K562 (cell line): ENCODE measurements at regions of chr11 and their contacts with region 1.

Region 1: GRCh38 chr11:114340311-114341131 is 44.3 kb downstream of the NNMT start:
- DNase-seq: peak; percentile 54 to 78 (median 60)
- ATAC-seq: peak; percentile 91
- H3K4me3 ChIP-seq: peak overlapping the region; percentile 27
- H3K27ac ChIP-seq: peak overlapping the region; percentile 40; the same call in 1 of the 3 replicates
- H3K4me1 ChIP-seq: peaks cover 6 to 11% of the 10 kb centered on the region in 2 experiments; a peak in 3 of 5 replicates
- H3K27me3 ChIP-seq: no peaks in the 10 kb centered on the region
- CTCF ChIP-seq: peak; percentile 80 to 90 (median 84)
- EP300 ChIP-seq: peak; percentile 9; the same call in 1 of the 2 replicates
- POLR2A ChIP-seq: no peak
- RAD21 ChIP-seq: peak; percentile 87 to 89

Region 2: DNA sequence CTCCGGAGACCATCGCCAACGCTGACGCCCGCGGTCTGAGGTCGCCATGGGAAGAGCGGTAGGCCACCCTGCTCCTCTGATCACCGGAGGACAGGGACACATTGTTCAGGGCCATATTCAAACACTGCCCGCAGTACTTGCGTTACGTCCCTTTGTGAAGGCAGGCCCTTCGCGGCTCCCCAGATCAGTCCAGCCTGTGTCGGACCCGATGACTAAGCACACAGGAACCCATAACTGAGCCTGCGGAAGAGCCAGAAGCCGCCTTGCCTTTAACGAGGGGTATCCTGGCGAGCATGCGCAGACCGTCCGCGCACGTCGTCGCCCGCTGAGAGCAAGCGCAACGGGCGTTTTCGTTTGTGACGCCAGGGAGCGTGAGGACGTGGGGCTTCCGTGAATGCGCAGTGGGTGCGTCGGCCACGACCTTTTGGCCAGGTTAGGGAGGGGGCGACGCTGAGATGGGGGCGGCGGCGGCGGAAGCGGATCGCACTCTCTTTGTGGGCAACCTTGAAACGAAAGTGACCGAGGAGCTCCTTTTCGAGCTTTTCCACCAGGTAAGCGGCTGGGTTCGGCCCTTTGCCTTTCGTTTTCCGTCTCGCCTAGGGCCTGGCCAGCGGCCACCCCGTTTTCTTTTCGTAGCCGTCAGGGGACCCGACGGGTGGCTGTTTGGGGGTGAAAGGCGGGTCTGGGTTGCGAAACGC is 59.8 kb after region 1 on chr11 and contains the starts of genes C11orf71 and RBM7:
- CTCF ChIA-PET with region 1: no interaction called
- POLR2A ChIA-PET with region 1: no interaction called
- in situ Hi-C with region 1: no loop called
- intact Hi-C with region 1: loop called (anchors 2 kb)
- DNase-seq: peak; percentile 90 to 99 (median 92)
- ATAC-seq: peak; percentile 90
- H3K4me3 ChIP-seq: peak within 1 kb of the TSS; percentile 54
- H3K27ac ChIP-seq: peak within 1 kb of the TSS; percentile 99
- H3K4me1 ChIP-seq: peaks cover 3 to 25% of the 10 kb centered on the region in 2 experiments
- H3K27me3 ChIP-seq: no peaks in the 10 kb centered on the region
- CTCF ChIP-seq: peak in 1 of 3 experiments; percentile 18; a peak in 1 of 6 replicates
- EP300 ChIP-seq: peak; percentile 28; the same call in 1 of the 2 replicates
- POLR2A ChIP-seq: peak; percentile 98
- RAD21 ChIP-seq: no peak
- polyA plus RNA-seq, gene C11orf71: 2.9 to 4.3 TPM
- polyA plus RNA-seq, gene RBM7: 62.7 to 76.8 TPM

Region 3: DNA sequence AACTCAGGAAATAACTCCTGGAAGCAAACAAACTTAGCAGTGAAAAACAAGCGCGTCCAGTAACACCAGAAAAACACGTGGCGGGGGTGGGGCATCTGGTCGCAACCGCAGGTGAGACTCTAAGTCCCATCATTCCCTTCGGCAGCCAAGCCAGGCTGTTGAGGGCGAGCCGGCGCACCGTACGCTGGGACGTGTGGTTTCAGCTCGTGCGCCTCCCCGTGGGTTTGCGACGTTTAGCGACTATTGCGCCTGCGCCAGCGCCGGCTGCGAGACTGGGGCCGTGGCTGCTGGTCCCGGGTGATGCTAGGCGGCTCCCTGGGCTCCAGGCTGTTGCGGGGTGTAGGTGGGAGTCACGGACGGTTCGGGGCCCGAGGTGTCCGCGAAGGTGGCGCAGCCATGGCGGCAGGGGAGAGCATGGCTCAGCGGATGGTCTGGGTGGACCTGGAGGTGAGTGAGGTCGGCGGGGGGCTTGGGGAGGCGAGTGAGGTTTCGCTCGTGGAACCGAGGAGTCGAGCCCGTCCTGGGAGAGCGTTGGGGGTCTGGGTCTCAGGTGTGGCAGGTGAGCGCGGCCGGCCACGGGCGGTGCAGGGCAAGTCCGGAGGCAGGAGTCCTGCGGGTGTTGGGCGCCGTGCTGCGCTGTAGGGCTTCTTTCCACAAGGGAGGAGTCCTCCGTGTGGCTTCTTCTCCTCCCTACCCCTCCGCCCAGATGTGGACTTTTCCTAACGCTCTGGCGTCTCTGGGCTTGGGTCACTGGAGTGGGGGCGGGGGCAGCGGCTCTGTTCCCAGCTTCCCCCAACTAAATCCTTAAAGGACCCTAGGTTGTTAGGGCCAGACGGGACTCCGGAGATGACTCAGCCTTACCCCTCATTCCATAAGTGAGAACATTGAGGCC is 99.0 kb after region 1 on chr11 and contains the start of gene REXO2:
- CTCF ChIA-PET with region 1: no interaction called
- POLR2A ChIA-PET with region 1: no interaction called
- in situ Hi-C with region 1: no loop called
- intact Hi-C with region 1: loop called (anchors 5 kb)
- DNase-seq: peak; percentile 90 to 98 (median 92)
- ATAC-seq: peak; percentile 89
- H3K4me3 ChIP-seq: peak within 1 kb of the TSS; percentile 82
- H3K27ac ChIP-seq: peak within 1 kb of the TSS; percentile 85
- H3K4me1 ChIP-seq: peaks cover 7 to 16% of the 10 kb centered on the region in 2 experiments; a peak in 3 of 5 replicates
- H3K27me3 ChIP-seq: no peaks in the 10 kb centered on the region
- CTCF ChIP-seq: peak; percentile 7 to 42 (median 27); a peak in 4 of 6 replicates
- EP300 ChIP-seq: peak; percentile 37
- POLR2A ChIP-seq: peak; percentile 88
- RAD21 ChIP-seq: peak; percentile 7 to 23; a peak in 1 of 4 replicates
- polyA plus RNA-seq, gene REXO2: 143 to 151 TPM

Region 4: GRCh38 chr11:114478768-114479167 is 138.2 kb after region 1 on chr11:
- CTCF ChIA-PET with region 1: no interaction called
- POLR2A ChIA-PET with region 1: no interaction called
- in situ Hi-C with region 1: no loop called
- intact Hi-C with region 1: loop called (anchors 2 kb)
- DNase-seq: peak in 1 of 4 experiments; percentile 7
- ATAC-seq: peak; percentile 55; the same call in 2 of the 3 replicates
- H3K4me3 ChIP-seq: no peak overlapping the region
- H3K27ac ChIP-seq: no peak overlapping the region
- H3K4me1 ChIP-seq: no peaks in the 10 kb centered on the region
- H3K27me3 ChIP-seq: no peaks in the 10 kb centered on the region; a peak in 1 of 5 replicates
- CTCF ChIP-seq: peak in 1 of 3 experiments; percentile 34; a peak in 2 of 6 replicates
- EP300 ChIP-seq: no peak
- POLR2A ChIP-seq: no peak
- RAD21 ChIP-seq: peak; percentile 9 to 41; a peak in 2 of 4 replicates

Region 5: GRCh38 chr11:114586797-114587196 is 246.3 kb after region 1 on chr11:
- CTCF ChIA-PET with region 1: no interaction called
- POLR2A ChIA-PET with region 1: no interaction called
- in situ Hi-C with region 1: no loop called
- intact Hi-C with region 1: loop called (anchors 10 kb)
- DNase-seq: peak in 1 of 4 experiments; percentile 18
- ATAC-seq: no peak; the same call in 2 of the 3 replicates
- H3K4me3 ChIP-seq: no peak overlapping the region
- H3K27ac ChIP-seq: no peak overlapping the region
- H3K4me1 ChIP-seq: no peaks in the 10 kb centered on the region
- H3K27me3 ChIP-seq: no peaks in the 10 kb centered on the region
- CTCF ChIP-seq: peak in 2 of 3 experiments; percentile 50 to 54; a peak in 2 of 6 replicates
- EP300 ChIP-seq: no peak
- POLR2A ChIP-seq: no peak
- RAD21 ChIP-seq: peak; percentile 40 to 58

Region 6: DNA sequence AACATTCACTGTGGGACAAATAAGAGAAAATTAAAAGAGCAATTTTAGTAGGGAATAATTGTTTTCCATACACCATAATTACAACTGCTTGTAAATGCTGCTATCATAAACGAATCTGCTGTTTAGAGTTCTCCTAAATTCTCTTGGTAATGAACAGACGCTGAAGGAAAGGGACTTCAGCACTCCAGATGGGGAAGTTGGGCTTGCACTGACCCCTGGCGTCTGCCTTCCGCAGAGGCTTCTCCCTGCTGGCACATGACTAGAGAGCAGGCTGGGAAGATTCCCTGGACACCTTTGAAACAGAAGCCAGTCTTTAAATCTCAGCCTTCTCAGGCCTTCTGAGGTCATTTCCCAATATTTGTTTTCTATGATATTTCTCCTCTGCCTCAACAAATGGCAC is 421.9 kb after region 1 on chr11:
- CTCF ChIA-PET with region 1: interaction called, 7 read pairs
- POLR2A ChIA-PET with region 1: no interaction called
- in situ Hi-C with region 1: no loop called
- intact Hi-C with region 1: loop called (anchors 1 kb)
- DNase-seq: peak; percentile 31 to 59 (median 44)
- ATAC-seq: peak; percentile 95
- H3K4me3 ChIP-seq: no peak overlapping the region
- H3K27ac ChIP-seq: no peak overlapping the region
- H3K4me1 ChIP-seq: no peaks in the 10 kb centered on the region
- H3K27me3 ChIP-seq: no peaks in the 10 kb centered on the region
- CTCF ChIP-seq: peak; percentile 72 to 82 (median 77)
- EP300 ChIP-seq: no peak
- POLR2A ChIP-seq: no peak
- RAD21 ChIP-seq: peak; percentile 80 to 83